ENCODE measurements at regions of chr13 and their contacts with region 1.

Region 1: GRCh38 chr13:48562296-48563066 is 29.6 kb upstream of the RCBTB2 start:
- DNase-seq: peak; percentile 27 to 93 (median 66)
- ATAC-seq: peak; percentile 98
- H3K4me3 ChIP-seq: no peak overlapping the region
- H3K4me3 Mint-ChIP-seq: peak overlapping the region; percentile 43
- H3K27ac ChIP-seq: peak overlapping the region in 1 of 2 experiments; percentile 3
- H3K27ac Mint-ChIP-seq: no peak overlapping the region
- H3K4me1 ChIP-seq: peaks cover 27% of the 10 kb centered on the region
- H3K4me1 Mint-ChIP-seq: peaks cover 33% of the 10 kb centered on the region
- H3K27me3 ChIP-seq: no peaks in the 10 kb centered on the region
- H3K27me3 Mint-ChIP-seq: peaks cover 43% of the 10 kb centered on the region
- CTCF ChIP-seq: no peak

Region 2: DNA sequence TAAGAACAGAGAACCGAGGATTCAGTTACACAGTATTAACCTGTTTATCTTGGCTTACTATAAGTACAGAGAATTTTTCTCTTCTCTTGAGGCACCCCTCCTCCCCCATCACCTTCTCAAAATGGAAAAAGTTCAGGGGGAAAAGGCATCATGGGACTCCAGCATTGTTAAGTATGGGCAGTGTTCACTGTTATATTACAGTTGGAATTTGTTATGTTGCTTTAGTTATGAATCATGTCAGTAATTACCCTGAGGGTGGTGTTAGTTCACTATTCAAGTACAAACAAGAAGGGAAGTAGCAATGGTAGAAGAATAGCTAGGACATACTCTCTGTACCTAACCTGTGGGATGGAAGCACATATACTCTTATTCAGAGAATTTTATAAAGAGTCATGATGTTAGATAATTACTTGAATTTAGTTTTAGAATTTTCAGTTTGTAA is 161.6 kb before region 1 on chr13:
- CTCF ChIA-PET with region 1: no interaction called
- POLR2A ChIA-PET with region 1: no interaction called
- intact Hi-C with region 1: loop called in 1 of 2 experiments (anchors 5 kb)
- DNase-seq: peak in 2 of 9 experiments; percentile 24 to 48
- ATAC-seq: peak; percentile 38
- H3K4me3 ChIP-seq: no peak overlapping the region
- H3K4me3 Mint-ChIP-seq: no peak overlapping the region
- H3K27ac ChIP-seq: peak overlapping the region in 1 of 2 experiments; percentile 73
- H3K27ac Mint-ChIP-seq: peak overlapping the region; percentile 34
- H3K4me1 ChIP-seq: peaks cover 33% of the 10 kb centered on the region
- H3K4me1 Mint-ChIP-seq: peaks cover 46% of the 10 kb centered on the region
- H3K27me3 ChIP-seq: no peaks in the 10 kb centered on the region
- H3K27me3 Mint-ChIP-seq: no peaks in the 10 kb centered on the region
- CTCF ChIP-seq: no peak

Region 3: GRCh38 chr13:48412881-48413351 is 149.6 kb before region 1 on chr13 and contains the start of gene LPAR6:
- CTCF ChIA-PET with region 1: no interaction called
- POLR2A ChIA-PET with region 1: no interaction called
- intact Hi-C with region 1: loop called in 1 of 2 experiments (anchors 2 kb)
- DNase-seq: peak in 2 of 9 experiments; percentile 51 to 74
- ATAC-seq: peak; percentile 26
- H3K4me3 ChIP-seq: peak within 1 kb of the TSS; percentile 38 to 67
- H3K4me3 Mint-ChIP-seq: peak within 1 kb of the TSS; percentile 98
- H3K27ac ChIP-seq: peak within 1 kb of the TSS; percentile 24 to 83
- H3K27ac Mint-ChIP-seq: peak within 1 kb of the TSS; percentile 98
- H3K4me1 ChIP-seq: peaks cover 4% of the 10 kb centered on the region
- H3K4me1 Mint-ChIP-seq: peaks cover 42% of the 10 kb centered on the region
- H3K27me3 ChIP-seq: no peaks in the 10 kb centered on the region
- H3K27me3 Mint-ChIP-seq: no peaks in the 10 kb centered on the region
- CTCF ChIP-seq: no peak
- total RNA-seq, gene LPAR6: 5.4 to 5.7 TPM

Region 4: GRCh38 chr13:48505597-48506091 is 56.8 kb before region 1 on chr13:
- CTCF ChIA-PET with region 1: interaction called, 3 read pairs
- POLR2A ChIA-PET with region 1: interaction called, 13 read pairs
- intact Hi-C with region 1: loop called (anchors 1 to 5 kb)
- DNase-seq: peak in 8 of 9 experiments; percentile 36 to 92 (median 58)
- ATAC-seq: peak; percentile 92
- H3K4me3 ChIP-seq: no peak overlapping the region
- H3K4me3 Mint-ChIP-seq: peak overlapping the region; percentile 65
- H3K27ac ChIP-seq: peak overlapping the region; percentile 36 to 76
- H3K27ac Mint-ChIP-seq: peak overlapping the region; percentile 89
- H3K4me1 ChIP-seq: peaks cover 29% of the 10 kb centered on the region
- H3K4me1 Mint-ChIP-seq: peaks cover 51% of the 10 kb centered on the region
- H3K27me3 ChIP-seq: no peaks in the 10 kb centered on the region
- H3K27me3 Mint-ChIP-seq: no peaks in the 10 kb centered on the region
- CTCF ChIP-seq: no peak

Region 5: DNA sequence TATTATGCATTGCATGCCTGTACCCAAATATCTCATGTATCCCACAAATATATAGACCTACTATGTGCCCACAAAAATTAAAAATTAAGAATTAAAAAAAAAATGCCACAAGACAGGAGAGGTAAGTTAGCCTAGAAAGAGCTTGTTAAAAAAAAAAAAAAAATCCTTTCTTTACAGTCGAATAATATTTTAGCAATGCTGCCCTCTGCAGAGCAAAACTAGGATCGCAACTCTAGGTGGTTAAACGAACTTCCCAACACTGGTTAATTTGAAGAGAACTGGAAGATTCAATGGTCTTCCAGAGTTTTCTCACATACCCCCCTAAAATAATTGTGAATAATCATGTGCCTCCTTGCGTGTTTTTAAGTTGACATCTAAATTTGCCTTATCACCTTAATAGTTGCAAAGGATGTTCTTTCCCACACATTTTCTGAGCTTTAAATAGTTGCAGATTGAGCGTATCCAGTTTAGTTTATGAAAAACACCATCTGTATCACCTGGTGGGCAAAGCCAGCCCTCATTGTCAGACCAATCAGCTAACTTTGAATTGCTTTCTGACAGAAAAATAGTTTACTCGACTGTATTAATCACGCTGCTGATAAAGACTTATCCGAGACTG is 17.8 kb after region 1 on chr13:
- CTCF ChIA-PET with region 1: interaction called, 54 read pairs
- POLR2A ChIA-PET with region 1: interaction called, 9 read pairs
- intact Hi-C with region 1: loop called in 1 of 2 experiments (anchors 1 kb)
- DNase-seq: peak; percentile 50 to 82 (median 79)
- ATAC-seq: peak; percentile 79
- H3K4me3 ChIP-seq: no peak overlapping the region
- H3K4me3 Mint-ChIP-seq: no peak overlapping the region
- H3K27ac ChIP-seq: no peak overlapping the region
- H3K27ac Mint-ChIP-seq: no peak overlapping the region
- H3K4me1 ChIP-seq: no peaks in the 10 kb centered on the region
- H3K4me1 Mint-ChIP-seq: peaks cover 3% of the 10 kb centered on the region
- H3K27me3 ChIP-seq: no peaks in the 10 kb centered on the region
- H3K27me3 Mint-ChIP-seq: peaks cover 30% of the 10 kb centered on the region
- CTCF ChIP-seq: peak; percentile 85

Measured in CD8-positive, alpha-beta T cell (primary cell).